AG04450 (cell line): ENCODE measurements at regions of chr2 and their contacts with region 1.

Region 1: GRCh38 chr2:88880441-88880953 is 189.0 kb downstream of the RPIA start:
- DNase-seq: no peak
- H3K4me3 ChIP-seq: no peak overlapping the region
- H3K27ac ChIP-seq: no peak overlapping the region
- H3K27me3 ChIP-seq: no peaks in the 10 kb centered on the region
- CTCF ChIP-seq: peak; percentile 86

Region 2: GRCh38 chr2:88342749-88343148 is 537.7 kb before region 1 on chr2:
- CTCF ChIA-PET with region 1: no interaction called
- POLR2A ChIA-PET with region 1: no interaction called
- DNase-seq: no peak
- H3K4me3 ChIP-seq: no peak overlapping the region
- H3K27ac ChIP-seq: no peak overlapping the region
- H3K27me3 ChIP-seq: no peaks in the 10 kb centered on the region
- CTCF ChIP-seq: no peak

Region 3: DNA sequence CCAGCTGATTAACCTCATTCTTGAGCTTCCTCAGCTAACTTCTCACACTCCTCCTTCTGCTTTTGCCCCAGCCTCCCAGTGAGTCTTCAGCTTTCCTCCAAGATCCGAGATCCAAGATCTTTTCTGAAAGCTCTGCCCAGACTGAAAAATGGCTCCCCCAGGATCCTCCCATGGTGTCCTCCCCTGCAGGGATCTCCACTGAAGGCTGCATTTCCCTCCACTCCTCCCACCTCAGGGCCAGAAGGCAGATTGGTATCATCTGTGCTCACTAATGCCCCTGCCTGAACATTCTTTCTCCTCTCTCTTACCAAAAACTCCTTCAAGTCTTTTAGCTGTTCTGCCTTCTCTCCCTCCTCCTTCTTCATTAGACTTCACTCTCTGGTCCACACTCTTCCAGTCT is 421.9 kb before region 1 on chr2:
- CTCF ChIA-PET with region 1: no interaction called
- POLR2A ChIA-PET with region 1: no interaction called
- DNase-seq: no peak
- H3K4me3 ChIP-seq: no peak overlapping the region
- H3K27ac ChIP-seq: no peak overlapping the region
- H3K27me3 ChIP-seq: peaks cover 4% of the 10 kb centered on the region
- CTCF ChIP-seq: no peak

Region 4: DNA sequence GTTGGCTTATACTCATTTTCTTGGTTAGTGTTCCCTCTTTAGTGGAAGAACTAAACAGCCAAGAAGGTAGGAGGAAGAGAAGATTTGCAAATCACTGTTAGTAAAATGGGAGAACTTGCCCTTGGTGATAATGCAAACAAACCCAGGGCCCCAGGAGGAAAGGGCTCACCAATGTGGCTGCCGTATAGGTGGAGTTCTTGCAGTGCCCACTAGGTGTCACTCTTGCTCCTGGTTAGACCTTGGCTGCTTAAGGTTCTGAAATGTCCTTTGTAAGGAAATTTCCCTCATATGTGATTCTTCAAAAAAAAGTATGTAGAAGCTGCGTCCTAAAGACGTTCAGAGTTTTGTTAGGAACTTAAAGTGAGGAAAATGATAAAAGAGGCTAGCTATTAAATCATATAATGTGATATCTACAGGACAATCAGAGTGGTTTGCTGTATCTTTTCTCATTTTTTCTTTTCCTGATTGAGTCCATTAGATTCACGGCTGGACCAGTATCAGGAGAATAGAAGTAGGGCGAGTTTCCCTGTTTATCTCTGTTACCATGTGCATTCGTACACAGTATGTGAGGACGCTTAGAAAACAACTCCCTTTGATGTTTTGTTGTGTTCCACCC is 140.4 kb before region 1 on chr2:
- CTCF ChIA-PET with region 1: interaction called, 16 read pairs
- POLR2A ChIA-PET with region 1: no interaction called
- DNase-seq: peak; percentile 51
- H3K4me3 ChIP-seq: no peak overlapping the region
- H3K27ac ChIP-seq: no peak overlapping the region
- H3K27me3 ChIP-seq: no peaks in the 10 kb centered on the region
- CTCF ChIP-seq: peak; percentile 96

Region 5: DNA sequence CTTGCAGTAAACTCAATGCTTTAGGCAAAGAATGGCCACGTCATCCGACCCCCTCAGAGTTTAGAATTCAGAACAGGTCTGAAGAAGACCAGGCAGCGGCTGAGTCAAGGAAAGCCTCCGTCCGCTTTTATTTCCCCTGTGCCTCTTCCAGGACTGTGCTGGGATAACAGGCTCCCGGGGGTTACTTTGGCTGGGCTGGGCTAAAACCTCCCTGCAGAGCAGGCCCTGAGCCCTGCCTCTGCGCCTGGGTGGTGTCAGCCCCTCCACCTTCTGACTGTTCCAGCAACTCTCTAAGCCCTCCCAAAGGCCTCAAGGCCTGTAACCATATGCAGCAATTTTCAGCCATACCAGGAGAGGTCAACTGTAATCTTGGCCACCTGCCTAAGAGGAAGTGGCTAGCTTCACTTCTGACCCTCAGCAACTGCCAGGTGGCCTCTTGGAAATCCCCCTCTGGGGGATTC is 22.5 kb before region 1 on chr2:
- CTCF ChIA-PET with region 1: interaction called, 50 read pairs
- POLR2A ChIA-PET with region 1: no interaction called
- DNase-seq: no peak
- H3K4me3 ChIP-seq: no peak overlapping the region
- H3K27ac ChIP-seq: no peak overlapping the region
- H3K27me3 ChIP-seq: no peaks in the 10 kb centered on the region
- CTCF ChIP-seq: no peak

Region 6: GRCh38 chr2:88892207-88892606 is 11.7 kb after region 1 on chr2:
- CTCF ChIA-PET with region 1: interaction called, 20 read pairs
- POLR2A ChIA-PET with region 1: no interaction called
- DNase-seq: no peak
- H3K4me3 ChIP-seq: no peak overlapping the region
- H3K27ac ChIP-seq: no peak overlapping the region
- H3K27me3 ChIP-seq: no peaks in the 10 kb centered on the region
- CTCF ChIP-seq: no peak

Region 7: GRCh38 chr2:88897715-88898114 is 17.2 kb after region 1 on chr2:
- CTCF ChIA-PET with region 1: interaction called, 25 read pairs
- POLR2A ChIA-PET with region 1: no interaction called
- DNase-seq: no peak
- H3K4me3 ChIP-seq: no peak overlapping the region
- H3K27ac ChIP-seq: no peak overlapping the region
- H3K27me3 ChIP-seq: no peaks in the 10 kb centered on the region
- CTCF ChIP-seq: no peak

Region 8: DNA sequence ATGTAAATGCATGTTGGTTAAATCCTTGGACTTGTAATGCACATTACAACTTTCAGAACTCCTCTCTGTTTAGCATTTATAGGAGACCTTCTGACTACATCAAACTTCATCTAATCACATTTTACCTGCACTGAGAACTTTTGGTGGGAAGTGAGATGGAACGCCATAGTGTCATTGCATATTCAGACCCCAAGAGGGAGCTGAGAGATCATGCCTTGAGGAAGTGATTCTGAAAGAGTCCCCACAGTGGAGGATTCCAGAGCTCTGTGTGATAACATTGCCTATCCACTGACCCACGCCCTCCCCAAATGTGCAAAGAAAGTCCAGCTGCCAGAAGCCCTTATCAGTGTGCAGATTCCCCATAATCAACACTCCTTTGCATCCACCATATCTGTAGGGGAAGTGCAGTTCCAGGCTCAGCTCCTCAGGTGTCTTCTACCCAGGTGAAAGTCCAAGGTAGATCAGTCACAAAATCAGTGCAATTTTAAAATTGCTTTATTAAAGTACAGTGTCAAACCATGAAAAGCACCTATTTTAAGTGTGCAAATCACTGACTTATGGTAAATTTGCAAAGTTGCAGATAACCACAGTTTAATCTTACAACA is 23.4 kb after region 1 on chr2:
- CTCF ChIA-PET with region 1: interaction called, 25 read pairs
- POLR2A ChIA-PET with region 1: no interaction called
- DNase-seq: no peak
- H3K4me3 ChIP-seq: no peak overlapping the region
- H3K27ac ChIP-seq: no peak overlapping the region
- H3K27me3 ChIP-seq: no peaks in the 10 kb centered on the region
- CTCF ChIP-seq: peak; percentile 76

Region 9: DNA sequence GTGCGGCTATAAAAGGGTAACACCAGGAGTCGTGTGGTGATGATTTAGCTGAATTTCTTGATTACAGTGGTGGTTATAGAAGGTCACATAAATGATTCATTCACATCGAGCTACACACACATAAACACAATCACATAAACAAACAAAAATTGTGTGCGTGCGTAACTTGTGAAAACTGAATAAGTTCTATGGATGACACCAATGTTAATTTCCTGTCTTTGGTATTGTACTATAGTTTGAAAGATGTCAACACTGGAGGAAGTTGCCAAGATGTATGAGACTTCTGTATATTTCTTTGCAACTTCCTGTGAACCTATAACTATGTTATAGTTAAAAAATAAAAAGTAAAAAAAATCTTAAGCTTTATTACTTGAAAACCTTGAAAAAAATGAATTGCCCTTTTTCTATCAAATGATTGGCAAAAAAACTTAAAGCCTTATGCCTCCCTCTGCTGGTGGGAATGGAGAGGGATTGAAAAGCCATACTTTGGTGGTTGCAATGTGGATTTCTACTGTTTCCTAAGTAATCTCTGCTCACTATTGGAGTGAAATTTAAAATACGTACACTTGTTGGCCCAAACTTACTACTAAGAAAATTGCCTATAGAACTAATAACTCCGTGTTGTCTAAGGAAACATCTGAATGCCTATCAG is 38.7 kb after region 1 on chr2:
- CTCF ChIA-PET with region 1: interaction called, 27 read pairs
- POLR2A ChIA-PET with region 1: no interaction called
- DNase-seq: no peak
- H3K4me3 ChIP-seq: no peak overlapping the region
- H3K27ac ChIP-seq: no peak overlapping the region
- H3K27me3 ChIP-seq: no peaks in the 10 kb centered on the region
- CTCF ChIP-seq: peak; percentile 78